ENCODE measurements at regions of chr2 and their contacts with region 1.

Region 1: GRCh38 chr2:64586883-64587481 is 62.9 kb downstream of the AFTPH start:
- DNase-seq: no peak
- H3K4me3 Mint-ChIP-seq: no peak overlapping the region
- H3K27ac Mint-ChIP-seq: peak overlapping the region; percentile 22
- H3K4me1 Mint-ChIP-seq: peaks cover 21% of the 10 kb centered on the region
- H3K27me3 Mint-ChIP-seq: no peaks in the 10 kb centered on the region

Region 2: GRCh38 chr2:64865073-64865830 is 278.3 kb after region 1 on chr2:
- intact Hi-C with region 1: loop called (anchors 1 kb)
- DNase-seq: peak; percentile 57
- H3K4me3 Mint-ChIP-seq: peak overlapping the region; percentile 74
- H3K27ac Mint-ChIP-seq: no peak overlapping the region
- H3K4me1 Mint-ChIP-seq: peaks cover 4% of the 10 kb centered on the region
- H3K27me3 Mint-ChIP-seq: peaks cover 13% of the 10 kb centered on the region

Region 3: DNA sequence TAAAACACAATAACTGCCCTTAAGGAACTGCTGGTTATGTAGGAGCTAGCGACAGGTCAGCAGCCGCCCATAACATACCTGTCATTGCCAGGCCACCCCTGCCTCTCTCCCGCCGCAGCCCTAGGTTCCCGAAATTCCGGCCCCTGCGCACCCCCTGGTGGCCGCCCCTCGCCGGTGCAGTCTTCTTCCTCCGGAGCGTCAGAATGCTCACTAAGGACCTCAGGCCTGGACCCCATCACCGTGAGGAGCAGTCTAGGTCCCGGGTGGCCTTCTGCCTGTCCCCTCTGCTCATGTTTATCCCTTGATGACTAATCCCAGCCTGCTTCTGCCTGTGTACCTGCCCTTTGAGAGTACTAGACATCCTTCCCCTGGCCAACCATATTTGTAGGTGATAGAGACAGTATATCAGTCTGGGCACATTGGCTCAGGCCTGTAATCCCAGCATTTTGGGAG is 286.5 kb after region 1 on chr2:
- intact Hi-C with region 1: loop called (anchors 1 kb)
- DNase-seq: peak; percentile 73
- H3K4me3 Mint-ChIP-seq: no peak overlapping the region
- H3K27ac Mint-ChIP-seq: peak overlapping the region; percentile 12
- H3K4me1 Mint-ChIP-seq: peaks cover 6% of the 10 kb centered on the region
- H3K27me3 Mint-ChIP-seq: peaks cover 12% of the 10 kb centered on the region

Region 4: DNA sequence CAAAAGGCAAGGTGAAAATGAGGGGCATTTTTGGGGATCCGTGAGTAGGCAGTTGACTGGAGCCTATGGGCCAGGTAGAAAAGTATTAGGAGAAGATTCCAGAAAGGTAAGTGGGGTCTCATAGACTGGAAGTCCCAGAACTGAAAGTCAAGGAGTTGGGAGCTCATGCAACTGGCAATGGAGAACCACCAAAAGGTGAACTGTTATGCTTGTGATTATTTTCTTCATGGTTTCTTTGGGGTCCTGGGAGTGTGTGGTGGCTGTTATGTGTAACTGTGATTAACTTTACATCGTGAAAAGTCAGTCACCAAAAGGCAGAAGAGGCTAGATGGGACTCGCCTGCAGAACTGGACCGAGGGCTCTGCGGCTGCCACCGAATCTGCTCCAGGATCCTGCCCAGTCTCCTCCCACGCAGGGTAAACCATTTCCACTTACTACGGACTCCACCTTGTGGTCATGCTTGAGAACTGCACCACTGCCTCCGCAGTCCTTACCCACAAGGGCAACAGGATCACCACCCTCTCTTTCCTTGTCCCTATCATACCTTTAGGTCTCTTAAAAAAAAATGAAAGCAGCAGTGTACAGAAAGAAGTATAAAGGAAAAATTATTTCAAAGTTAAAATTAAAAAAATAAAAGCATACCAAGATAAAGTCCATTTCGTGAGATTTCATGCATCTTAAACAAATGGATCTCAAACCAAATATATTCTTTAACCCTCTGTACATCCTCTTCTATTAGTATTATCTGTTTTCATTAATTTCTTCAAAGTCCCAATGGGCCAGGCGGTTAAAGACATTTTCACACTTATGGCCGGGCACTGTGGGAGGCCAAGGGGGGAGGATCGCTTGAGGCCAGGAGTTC is 453.6 kb after region 1 on chr2:
- intact Hi-C with region 1: loop called (anchors 1 kb)
- DNase-seq: peak; percentile 69
- H3K4me3 Mint-ChIP-seq: no peak overlapping the region
- H3K27ac Mint-ChIP-seq: no peak overlapping the region
- H3K4me1 Mint-ChIP-seq: peaks cover 20% of the 10 kb centered on the region
- H3K27me3 Mint-ChIP-seq: no peaks in the 10 kb centered on the region